ENCODE measurements at regions of chr12 and their contacts with region 1.

Region 1: DNA sequence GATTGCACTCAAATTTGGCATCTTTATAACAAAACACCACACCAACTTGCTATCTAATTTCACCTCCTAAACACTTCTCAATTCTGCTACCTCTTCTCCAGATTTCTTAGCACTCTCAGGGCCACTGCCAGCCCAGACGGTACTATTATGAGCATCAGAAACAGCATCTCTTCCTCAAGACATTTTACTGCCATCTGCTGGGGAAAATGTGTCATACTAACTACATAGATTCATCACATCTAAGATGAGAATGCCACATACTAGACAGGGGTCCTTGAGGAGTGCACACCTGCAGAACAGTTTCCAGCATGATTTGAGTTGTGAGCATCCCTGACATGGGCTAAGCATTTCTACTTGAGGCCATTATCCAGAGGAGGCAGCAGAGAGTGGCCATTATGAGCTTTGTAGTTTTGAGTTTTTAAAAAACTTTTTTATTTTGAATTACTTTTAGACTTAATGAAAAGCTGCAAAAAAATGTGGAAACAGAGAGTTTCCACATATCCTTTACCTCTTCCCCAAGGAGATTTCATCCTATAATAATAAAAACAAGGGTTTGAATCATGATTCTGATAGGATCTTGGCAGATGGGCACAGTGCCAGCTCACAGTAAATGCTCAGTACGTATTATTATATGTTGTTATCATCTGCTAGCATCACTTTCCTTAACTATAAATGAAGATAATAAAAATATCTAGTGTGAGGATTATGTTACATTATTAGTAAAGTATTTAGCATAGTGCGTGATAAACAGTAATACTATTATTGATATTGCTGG is 15.2 kb upstream of the GRIP1 start:
- DNase-seq: peak in 1 of 5 donors; percentile 15
- ATAC-seq: peak in 2 of 4 donors; percentile 50 to 78
- H3K4me3 ChIP-seq: no peak overlapping the region
- H3K27ac ChIP-seq: no peak overlapping the region
- H3K4me1 ChIP-seq: no peaks in the 10 kb centered on the region
- H3K27me3 ChIP-seq: peaks cover 0 to 7% (median 0%) of the 10 kb centered on the region in 9 donors
- CTCF ChIP-seq: peak; percentile 21 to 68 (median 52)
- POLR2A ChIP-seq: no peak

Region 2: GRCh38 chr12:66144791-66145754 is 549.0 kb before region 1 on chr12:
- intact Hi-C with region 1: loop called in 2 of 10 experiments (anchors 10 kb)
- DNase-seq: peak in 2 of 5 donors; percentile 32 to 46
- ATAC-seq: peak; percentile 56 to 86 (median 84)
- H3K4me3 ChIP-seq: no peak overlapping the region
- H3K27ac ChIP-seq: peak overlapping the region in 11 of 12 donors; percentile 20 to 80 (median 62)
- H3K4me1 ChIP-seq: peaks cover 3 to 42% (median 19%) of the 10 kb centered on the region in 12 donors
- H3K27me3 ChIP-seq: no peaks in the 10 kb centered on the region
- CTCF ChIP-seq: peak in 11 of 12 donors; percentile 45 to 77 (median 68)
- POLR2A ChIP-seq: no peak

Region 3: DNA sequence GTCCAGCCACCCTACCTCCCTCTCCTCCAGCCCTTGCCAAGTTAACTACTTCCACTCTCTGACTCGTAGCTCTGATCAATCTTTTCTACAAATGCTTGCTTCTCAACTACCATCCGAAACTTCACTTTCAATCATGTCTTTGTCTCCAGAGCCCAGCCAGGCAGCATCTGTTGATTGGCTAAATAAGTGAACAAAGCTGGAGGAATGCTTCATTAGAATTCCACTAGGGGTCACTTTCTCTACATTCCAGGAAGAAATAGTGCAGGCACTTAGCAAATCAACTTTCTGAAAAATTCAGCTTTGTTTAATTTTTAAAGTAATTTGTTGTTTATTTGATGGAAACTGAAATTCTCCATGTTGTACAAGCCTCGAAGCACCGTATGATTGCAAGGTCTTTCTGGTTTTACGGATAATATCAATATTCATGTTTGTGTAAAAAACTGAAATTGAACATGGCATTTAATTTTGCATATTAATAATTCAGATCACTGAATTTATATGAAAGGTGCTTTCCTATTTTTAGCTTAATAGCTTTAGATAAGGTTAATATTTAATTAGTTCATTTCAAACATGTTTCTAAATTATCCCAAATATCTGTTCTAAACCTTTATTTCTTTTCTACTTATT is 424.2 kb before region 1 on chr12:
- intact Hi-C with region 1: loop called in 5 of 10 experiments (anchors 5 to 10 kb)
- DNase-seq: no peak
- ATAC-seq: peak in 1 of 4 donors; percentile 47
- H3K4me3 ChIP-seq: no peak overlapping the region
- H3K27ac ChIP-seq: peak overlapping the region in 1 of 12 donors; percentile 76
- H3K4me1 ChIP-seq: peaks cover 0 to 26% (median 0%) of the 10 kb centered on the region in 12 donors
- H3K27me3 ChIP-seq: peaks cover 0 to 8% (median 0%) of the 10 kb centered on the region in 9 donors
- CTCF ChIP-seq: peak; percentile 14 to 70 (median 53)
- POLR2A ChIP-seq: no peak

Region 4: GRCh38 chr12:66352197-66352596 is 341.9 kb before region 1 on chr12:
- intact Hi-C with region 1: loop called in 1 of 10 experiments (anchors 5 kb)
- DNase-seq: peak in 2 of 5 donors; percentile 37 to 53
- ATAC-seq: peak in 1 of 4 donors; percentile 52
- H3K4me3 ChIP-seq: no peak overlapping the region
- H3K27ac ChIP-seq: no peak overlapping the region
- H3K4me1 ChIP-seq: no peaks in the 10 kb centered on the region
- H3K27me3 ChIP-seq: no peaks in the 10 kb centered on the region
- CTCF ChIP-seq: peak in 9 of 12 donors; percentile 10 to 40 (median 24)
- POLR2A ChIP-seq: no peak

Region 5: GRCh38 chr12:66851134-66851533 is 157.0 kb after region 1 on chr12:
- intact Hi-C with region 1: loop called in 1 of 10 experiments (anchors 10 kb)
- DNase-seq: no peak
- ATAC-seq: no peak
- H3K4me3 ChIP-seq: no peak overlapping the region
- H3K27ac ChIP-seq: no peak overlapping the region
- H3K4me1 ChIP-seq: no peaks in the 10 kb centered on the region
- H3K27me3 ChIP-seq: no peaks in the 10 kb centered on the region
- CTCF ChIP-seq: no peak
- POLR2A ChIP-seq: no peak

Region 6: DNA sequence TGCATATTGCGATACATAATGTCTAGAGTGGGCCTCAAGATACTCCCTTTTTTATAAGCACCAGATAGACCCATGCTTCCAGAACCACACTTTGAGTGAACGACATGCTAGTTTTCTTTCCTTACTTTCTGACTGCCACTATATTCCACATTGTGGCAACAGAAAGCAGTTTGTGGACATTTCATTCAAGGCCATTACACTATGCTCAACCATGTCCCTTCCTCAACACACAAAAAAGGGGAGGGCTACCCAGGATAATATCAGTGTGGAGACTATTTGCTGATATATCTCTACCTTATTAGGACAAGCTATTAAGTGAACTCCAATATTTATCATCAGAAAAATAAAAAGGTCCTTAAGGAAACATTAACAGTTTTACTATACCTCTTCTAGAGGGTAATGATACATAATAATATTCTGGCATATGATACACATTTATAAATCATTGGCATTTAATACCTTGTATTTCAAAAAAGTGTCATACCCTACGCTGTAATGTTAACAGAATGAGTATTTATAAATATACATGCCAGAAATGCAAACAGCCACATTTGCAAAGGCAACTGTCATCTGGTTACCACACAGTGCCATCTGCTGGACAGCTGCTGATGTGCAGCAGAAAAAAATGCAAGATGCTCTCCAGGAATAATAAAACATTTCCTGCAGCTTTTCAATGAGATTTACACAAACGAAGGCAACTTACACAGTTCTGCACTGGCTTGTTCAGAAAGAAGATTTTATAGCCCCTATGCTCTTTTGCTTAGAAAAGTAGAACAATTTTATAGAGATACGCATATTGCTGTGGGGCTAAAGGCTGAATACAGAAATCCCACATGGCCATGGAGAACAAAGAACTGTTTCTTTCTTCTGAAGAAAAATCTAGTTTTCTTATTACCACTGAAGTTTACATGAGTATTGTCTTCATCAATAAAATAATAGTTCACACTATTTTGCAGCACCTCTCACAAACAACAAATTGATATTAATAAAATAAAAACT is 167.0 kb after region 1 on chr12:
- intact Hi-C with region 1: loop called (anchors 2 to 10 kb)
- DNase-seq: peak; percentile 17 to 60 (median 36)
- ATAC-seq: no peak
- H3K4me3 ChIP-seq: no peak overlapping the region
- H3K27ac ChIP-seq: no peak overlapping the region
- H3K4me1 ChIP-seq: no peaks in the 10 kb centered on the region
- H3K27me3 ChIP-seq: peaks cover 0 to 3% (median 0%) of the 10 kb centered on the region in 9 donors
- CTCF ChIP-seq: peak; percentile 67 to 92 (median 84)
- POLR2A ChIP-seq: no peak

Region 7: DNA sequence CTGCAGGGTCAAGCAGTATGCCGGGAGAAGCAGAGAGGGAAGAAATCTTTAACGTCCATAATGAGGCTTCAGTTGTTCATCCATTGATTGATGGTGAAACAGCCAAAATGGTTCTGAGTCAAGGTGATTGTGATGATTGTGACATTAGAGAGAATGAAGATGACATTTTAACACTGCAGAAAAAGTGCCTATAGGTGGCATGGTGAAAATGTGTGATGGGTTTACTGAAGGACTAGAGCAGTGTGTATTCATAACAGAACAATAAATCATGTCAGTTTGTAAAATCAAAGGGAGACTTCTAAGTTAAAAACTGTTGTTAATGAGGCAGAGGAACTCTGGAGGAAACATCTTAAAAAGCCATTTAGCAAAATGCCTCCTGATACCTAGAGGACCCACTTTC is 517.4 kb after region 1 on chr12:
- intact Hi-C with region 1: loop called in 1 of 10 experiments (anchors 10 kb)
- DNase-seq: no peak
- ATAC-seq: no peak
- H3K4me3 ChIP-seq: no peak overlapping the region
- H3K27ac ChIP-seq: no peak overlapping the region
- H3K4me1 ChIP-seq: peaks cover 0 to 3% (median 0%) of the 10 kb centered on the region in 12 donors
- H3K27me3 ChIP-seq: peaks cover 0 to 7% (median 0%) of the 10 kb centered on the region in 9 donors
- CTCF ChIP-seq: no peak
- POLR2A ChIP-seq: no peak